Heart left ventricle (tissue), 16 donors: ENCODE measurements at regions of chr7 and their contacts with region 1.

Region 1: DNA sequence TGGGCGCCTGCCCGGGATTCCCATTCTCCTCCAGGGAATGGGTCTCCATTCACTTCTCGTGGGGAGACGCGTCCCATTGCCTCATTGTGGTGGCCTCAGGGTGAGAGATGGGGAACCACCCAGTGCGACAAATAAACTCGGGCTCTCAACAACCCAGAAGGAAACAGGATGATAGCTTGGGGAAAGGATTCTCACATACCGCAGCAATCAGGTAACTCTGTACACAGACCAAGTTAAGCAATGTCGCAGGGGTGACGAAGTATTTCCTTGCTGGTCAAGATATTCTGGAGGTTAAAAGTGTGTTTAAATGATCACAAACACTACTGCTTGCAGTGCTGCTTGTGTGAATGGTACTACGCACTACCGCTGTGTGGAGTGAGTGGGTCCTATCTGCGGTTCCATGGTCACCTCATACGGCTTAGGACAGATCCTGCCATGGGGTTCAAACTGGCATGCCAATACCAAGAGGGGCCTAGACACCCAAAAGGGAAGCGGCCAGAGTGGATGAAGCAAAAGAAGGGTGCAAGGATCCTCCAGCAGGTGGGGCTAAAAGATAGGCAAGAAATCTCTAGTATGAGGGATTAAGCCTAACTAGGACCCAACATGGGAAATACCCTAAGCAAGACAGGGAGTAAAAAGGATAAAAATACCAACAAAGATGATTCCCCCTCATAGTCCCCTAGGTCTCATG is 143.8 kb upstream of the TMEM106B start:
- DNase-seq: peak in 1 of 5 donors; percentile 30
- ATAC-seq: peak in 3 of 4 donors; percentile 47 to 54 (median 48)
- H3K4me3 ChIP-seq: no peak overlapping the region
- H3K27ac ChIP-seq: no peak overlapping the region
- H3K4me1 ChIP-seq: no peaks in the 10 kb centered on the region
- H3K27me3 ChIP-seq: no peaks in the 10 kb centered on the region
- CTCF ChIP-seq: peak; percentile 43 to 67 (median 54)
- POLR2A ChIP-seq: no peak

Region 2: GRCh38 chr7:12322284-12322902 is 255.1 kb after region 1 on chr7:
- intact Hi-C with region 1: loop called (anchors 1 to 5 kb)
- DNase-seq: no peak
- ATAC-seq: no peak
- H3K4me3 ChIP-seq: no peak overlapping the region
- H3K27ac ChIP-seq: no peak overlapping the region
- H3K4me1 ChIP-seq: no peaks in the 10 kb centered on the region
- H3K27me3 ChIP-seq: peaks cover 0 to under 1% (median 0%) of the 10 kb centered on the region in 9 donors
- CTCF ChIP-seq: peak; percentile 49 to 78 (median 66)
- POLR2A ChIP-seq: no peak